ENCODE measurements at regions of chr1 and their contacts with region 1.

Region 1: DNA sequence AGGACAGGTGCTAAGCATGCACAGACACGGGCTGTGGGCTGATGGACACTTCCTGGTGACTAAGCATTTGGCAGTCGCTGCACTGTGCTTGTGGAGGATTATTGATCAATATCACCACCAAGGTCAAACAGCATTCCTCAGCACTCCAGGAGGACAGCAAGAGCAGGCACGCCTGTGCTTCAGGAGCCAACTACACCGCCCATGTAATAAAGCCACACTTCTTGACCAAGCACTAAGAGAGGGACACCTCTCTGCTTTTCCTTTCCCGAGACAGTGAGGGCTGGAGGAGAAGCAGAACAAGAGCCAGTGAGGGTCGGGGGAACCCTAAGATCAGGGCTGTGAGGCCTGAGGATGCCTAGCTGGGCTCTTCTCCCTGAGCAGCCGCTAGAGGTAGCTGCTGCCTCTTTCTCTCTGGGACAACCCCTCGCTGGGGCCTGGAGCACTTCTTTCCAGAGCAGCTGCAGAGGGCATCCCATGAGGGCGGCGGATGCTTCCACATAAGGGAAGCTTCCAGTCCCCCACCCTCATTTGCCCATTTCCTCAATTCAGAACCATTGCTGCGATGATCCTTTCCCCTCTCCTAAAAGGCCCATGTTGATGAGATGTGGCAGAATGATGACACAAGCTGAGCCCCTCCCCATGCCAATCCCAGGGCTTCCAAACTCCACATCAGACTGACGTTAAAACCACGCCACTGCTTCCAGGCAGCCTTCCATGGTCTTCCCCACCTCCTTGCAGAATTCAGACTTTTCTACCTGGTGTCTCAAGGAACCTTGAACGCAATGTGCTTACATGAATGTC is 19.1 kb downstream of the RAB7B start:
- DNase-seq: peak; percentile 62
- ATAC-seq: peak; percentile 80
- H3K4me3 ChIP-seq: no peak overlapping the region
- H3K4me3 Mint-ChIP-seq: no peak overlapping the region
- H3K27ac ChIP-seq: no peak overlapping the region
- H3K27ac Mint-ChIP-seq: no peak overlapping the region
- H3K4me1 ChIP-seq: no peaks in the 10 kb centered on the region
- H3K4me1 Mint-ChIP-seq: no peaks in the 10 kb centered on the region
- H3K27me3 ChIP-seq: no peaks in the 10 kb centered on the region
- H3K27me3 Mint-ChIP-seq: no peaks in the 10 kb centered on the region
- CTCF ChIP-seq: peak; percentile 67

Region 2: GRCh38 chr1:206001476-206001888 is 17.4 kb after region 1 on chr1:
- CTCF ChIA-PET with region 1: interaction called, 12 read pairs
- POLR2A ChIA-PET with region 1: no interaction called
- intact Hi-C with region 1: no loop called
- DNase-seq: no peak
- ATAC-seq: no peak
- H3K4me3 ChIP-seq: no peak overlapping the region
- H3K4me3 Mint-ChIP-seq: no peak overlapping the region
- H3K27ac ChIP-seq: no peak overlapping the region
- H3K27ac Mint-ChIP-seq: no peak overlapping the region
- H3K4me1 ChIP-seq: no peaks in the 10 kb centered on the region
- H3K4me1 Mint-ChIP-seq: peaks cover 3% of the 10 kb centered on the region
- H3K27me3 ChIP-seq: no peaks in the 10 kb centered on the region
- H3K27me3 Mint-ChIP-seq: no peaks in the 10 kb centered on the region
- CTCF ChIP-seq: no peak

Region 3: DNA sequence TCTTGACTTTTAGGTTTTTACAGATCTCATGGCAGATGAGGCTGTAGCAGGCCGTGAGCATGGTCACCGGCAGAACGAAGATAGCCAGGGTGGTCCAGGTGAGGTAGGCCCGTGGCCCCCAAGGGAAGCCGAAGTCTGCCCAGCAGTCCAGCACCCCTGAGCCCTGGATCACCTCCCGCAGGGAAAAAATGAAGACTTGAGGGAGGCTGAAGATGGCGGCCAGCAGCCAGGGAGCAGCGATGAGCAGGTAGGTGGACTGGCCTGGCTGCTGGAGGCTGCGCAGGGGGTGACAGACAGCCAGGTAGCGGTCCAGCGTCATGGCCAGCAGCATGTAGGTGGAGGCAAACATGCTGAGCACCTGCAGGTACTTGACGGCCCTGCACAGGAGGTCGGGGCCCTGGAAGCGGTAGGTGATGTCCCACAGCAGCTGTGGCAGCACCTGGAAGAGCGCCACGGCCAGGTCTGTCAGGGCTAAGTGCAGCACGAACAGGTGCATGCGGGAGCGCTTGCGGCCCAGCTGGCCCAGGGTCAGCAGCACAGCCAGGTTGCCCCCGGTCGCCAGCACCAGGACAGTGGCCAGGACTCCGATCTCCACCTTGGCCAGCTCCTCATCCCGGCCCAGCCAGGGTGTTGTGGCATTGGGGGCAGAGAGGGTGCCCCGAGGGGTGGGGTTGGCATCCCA is 132.2 kb after region 1 on chr1:
- CTCF ChIA-PET with region 1: interaction called, 235 read pairs
- POLR2A ChIA-PET with region 1: no interaction called
- intact Hi-C with region 1: no loop called
- DNase-seq: no peak
- ATAC-seq: no peak
- H3K4me3 ChIP-seq: no peak overlapping the region
- H3K4me3 Mint-ChIP-seq: peak overlapping the region; percentile 88
- H3K27ac ChIP-seq: no peak overlapping the region
- H3K27ac Mint-ChIP-seq: peak overlapping the region; percentile 27
- H3K4me1 ChIP-seq: peaks cover 14% of the 10 kb centered on the region in 2 donors
- H3K4me1 Mint-ChIP-seq: peaks cover 19% of the 10 kb centered on the region
- H3K27me3 ChIP-seq: peaks cover 0 to 13% (median 5%) of the 10 kb centered on the region in 4 experiments
- H3K27me3 Mint-ChIP-seq: peaks cover 23% of the 10 kb centered on the region
- CTCF ChIP-seq: no peak